H1 (cell line): ENCODE measurements at regions of chr17 and their contacts with region 1.

Region 1: DNA sequence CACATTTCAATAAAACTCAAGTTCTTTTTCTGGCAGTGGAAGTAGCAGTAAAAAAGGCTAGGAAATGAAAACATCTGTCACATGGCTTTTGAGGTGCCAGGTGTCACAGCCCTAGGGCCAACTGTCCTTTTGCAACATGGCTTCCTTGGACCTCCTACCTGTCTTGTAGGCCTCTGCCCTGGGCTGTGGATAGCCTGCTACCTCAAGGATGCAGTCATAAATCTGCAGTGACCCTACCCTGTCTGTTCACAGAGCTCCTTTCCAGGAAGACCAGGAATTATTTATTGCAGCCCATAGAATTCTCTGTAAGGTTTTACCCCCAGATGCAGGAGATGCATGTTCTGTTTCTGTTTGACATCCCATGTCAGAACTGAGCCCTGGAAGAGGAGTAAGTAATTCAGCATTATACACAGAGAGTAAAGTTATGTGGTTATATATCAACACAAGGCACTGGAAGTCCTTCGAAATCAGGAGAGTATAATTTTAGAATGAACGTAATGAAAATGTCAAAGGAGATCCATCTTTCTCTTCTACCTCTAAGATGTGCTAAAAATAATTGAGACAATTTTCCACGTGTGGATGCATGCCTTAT is 172.6 kb downstream of the MAP2K4 start:
- DNase-seq: no peak
- H3K4me3 ChIP-seq: no peak overlapping the region
- H3K27ac ChIP-seq: no peak overlapping the region
- H3K4me1 ChIP-seq: no peaks in the 10 kb centered on the region
- H3K27me3 ChIP-seq: no peaks in the 10 kb centered on the region
- CTCF ChIP-seq: no peak
- EP300 ChIP-seq: no peak
- POLR2A ChIP-seq: no peak
- RAD21 ChIP-seq: no peak

Region 2: GRCh38 chr17:12180644-12181261 is 12.5 kb before region 1 on chr17:
- CTCF ChIA-PET with region 1: interaction called, 12 read pairs
- POLR2A ChIA-PET with region 1: no interaction called
- DNase-seq: no peak
- H3K4me3 ChIP-seq: no peak overlapping the region
- H3K27ac ChIP-seq: no peak overlapping the region
- H3K4me1 ChIP-seq: no peaks in the 10 kb centered on the region; a peak in 1 of 7 replicates
- H3K27me3 ChIP-seq: no peaks in the 10 kb centered on the region
- CTCF ChIP-seq: peak in 2 of 3 experiments; percentile 58 to 70; a peak in 2 of 4 replicates
- EP300 ChIP-seq: no peak
- POLR2A ChIP-seq: no peak
- RAD21 ChIP-seq: peak; percentile 84 to 88

Region 3: GRCh38 chr17:12256380-12256995 is 63.2 kb after region 1 on chr17:
- CTCF ChIA-PET with region 1: no interaction called
- POLR2A ChIA-PET with region 1: no interaction called
- DNase-seq: no peak
- H3K4me3 ChIP-seq: no peak overlapping the region
- H3K27ac ChIP-seq: no peak overlapping the region
- H3K4me1 ChIP-seq: no peaks in the 10 kb centered on the region
- H3K27me3 ChIP-seq: peaks cover 0 to 1% (median 0%) of the 10 kb centered on the region in 4 experiments; a peak in 1 of 7 replicates
- CTCF ChIP-seq: peak in 2 of 3 experiments; percentile 57 to 73; a peak in 3 of 4 replicates
- EP300 ChIP-seq: no peak
- POLR2A ChIP-seq: no peak
- RAD21 ChIP-seq: peak; percentile 86 to 88